CD4-positive, alpha-beta T cell (primary cell): ENCODE measurements at regions of chr14 and their contacts with region 1.

Region 1: GRCh38 chr14:52950898-52951689 is at the start of gene FERMT2:
- DNase-seq: peak in 5 of 14 experiments; percentile 31 to 37 (median 34)
- ATAC-seq: peak; percentile 30
- H3K4me3 ChIP-seq: peak within 1 kb of the TSS; percentile 51
- H3K4me3 Mint-ChIP-seq: peak within 1 kb of the TSS; percentile 72
- H3K27ac ChIP-seq: no peak within 1 kb of the TSS
- H3K27ac Mint-ChIP-seq: no peak within 1 kb of the TSS
- H3K4me1 ChIP-seq: peaks cover 19% of the 10 kb centered on the region
- H3K4me1 Mint-ChIP-seq: peaks cover 22% of the 10 kb centered on the region
- H3K27me3 ChIP-seq: peaks cover 37 to 59% of the 10 kb centered on the region in 2 experiments
- H3K27me3 Mint-ChIP-seq: peaks cover 54% of the 10 kb centered on the region
- CTCF ChIP-seq: no peak
- total RNA-seq, gene FERMT2: 0.44 to 0.61 TPM

Region 2: GRCh38 chr14:52918486-52918885 is 32.6 kb before region 1 on chr14:
- CTCF ChIA-PET with region 1: no interaction called
- POLR2A ChIA-PET with region 1: interaction called, 4 read pairs
- intact Hi-C with region 1: loop called (anchors 2 to 5 kb)
- DNase-seq: peak in 7 of 14 experiments; percentile 2 to 89 (median 26)
- ATAC-seq: peak; percentile 98
- H3K4me3 ChIP-seq: no peak overlapping the region
- H3K4me3 Mint-ChIP-seq: no peak overlapping the region
- H3K27ac ChIP-seq: peak overlapping the region; percentile 48 to 76
- H3K27ac Mint-ChIP-seq: peak overlapping the region; percentile 94
- H3K4me1 ChIP-seq: peaks cover 10% of the 10 kb centered on the region
- H3K4me1 Mint-ChIP-seq: peaks cover 35% of the 10 kb centered on the region
- H3K27me3 ChIP-seq: no peaks in the 10 kb centered on the region
- H3K27me3 Mint-ChIP-seq: no peaks in the 10 kb centered on the region
- CTCF ChIP-seq: no peak

Region 3: GRCh38 chr14:53630336-53630735 is 679.2 kb after region 1 on chr14:
- CTCF ChIA-PET with region 1: no interaction called
- POLR2A ChIA-PET with region 1: no interaction called
- intact Hi-C with region 1: no loop called
- DNase-seq: no peak
- ATAC-seq: no peak
- H3K4me3 ChIP-seq: no peak overlapping the region
- H3K4me3 Mint-ChIP-seq: no peak overlapping the region
- H3K27ac ChIP-seq: no peak overlapping the region
- H3K27ac Mint-ChIP-seq: no peak overlapping the region
- H3K4me1 ChIP-seq: no peaks in the 10 kb centered on the region
- H3K4me1 Mint-ChIP-seq: no peaks in the 10 kb centered on the region
- H3K27me3 ChIP-seq: no peaks in the 10 kb centered on the region
- H3K27me3 Mint-ChIP-seq: no peaks in the 10 kb centered on the region
- CTCF ChIP-seq: no peak